Psoas muscle (tissue), 8 donors: ENCODE measurements at regions of chr1 and their contacts with region 1.

Region 1: DNA sequence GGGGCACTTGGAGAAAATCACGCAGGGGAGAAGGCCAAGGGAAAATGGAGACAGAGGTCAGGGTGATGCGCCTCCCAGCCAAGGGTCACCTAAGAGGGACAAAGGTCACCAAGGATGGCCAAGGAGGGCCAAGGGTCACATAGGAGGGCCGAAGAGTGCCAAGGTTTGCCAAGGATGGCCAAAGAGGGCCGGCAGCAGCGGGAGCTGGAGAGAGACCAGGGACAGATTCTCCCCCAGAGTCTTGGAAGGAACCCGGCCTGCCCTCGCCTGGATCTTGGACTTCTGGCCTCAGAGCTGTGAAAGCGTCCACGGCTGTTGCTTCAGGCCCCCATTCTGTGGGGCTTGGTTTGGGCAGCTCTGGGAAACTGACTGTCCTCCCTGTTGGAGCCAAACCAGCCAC is 25.6 kb upstream of the ARHGEF16 start:
- DNase-seq: peak in 1 of 2 donors; percentile 41
- ATAC-seq: no peak
- H3K4me3 ChIP-seq: no peak overlapping the region
- H3K27ac ChIP-seq: no peak overlapping the region
- H3K4me1 ChIP-seq: no peaks in the 10 kb centered on the region
- H3K27me3 ChIP-seq: peaks cover 0 to 3% (median 1%) of the 10 kb centered on the region in 3 donors
- CTCF ChIP-seq: no peak

Region 2: DNA sequence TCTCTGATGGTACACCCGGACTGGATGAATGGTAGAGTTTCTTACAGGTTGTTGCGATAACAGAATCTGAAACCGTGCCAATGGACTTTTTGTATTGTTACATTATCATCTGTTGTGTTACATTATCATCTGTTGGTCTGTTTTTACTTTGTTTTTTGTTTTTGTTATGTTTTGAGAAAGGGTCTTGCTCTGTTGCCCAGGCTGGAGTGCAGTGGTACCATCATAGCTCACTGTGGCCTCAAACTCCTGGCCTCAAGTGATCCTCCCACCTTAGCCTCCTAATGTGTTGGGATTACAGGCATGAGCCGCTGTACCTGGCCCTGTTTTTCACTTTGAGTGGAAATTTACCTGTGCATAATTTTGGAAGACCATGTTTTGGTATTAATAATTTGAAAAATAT is 1006.4 kb before region 1 on chr1:
- intact Hi-C with region 1: loop called in 1 of 2 experiments (anchors 5 kb)
- DNase-seq: no peak
- ATAC-seq: no peak
- H3K4me3 ChIP-seq: no peak overlapping the region
- H3K27ac ChIP-seq: no peak overlapping the region
- H3K4me1 ChIP-seq: no peaks in the 10 kb centered on the region
- H3K27me3 ChIP-seq: peaks cover 0 to 63% (median 27%) of the 10 kb centered on the region in 3 donors
- CTCF ChIP-seq: no peak

Region 3: DNA sequence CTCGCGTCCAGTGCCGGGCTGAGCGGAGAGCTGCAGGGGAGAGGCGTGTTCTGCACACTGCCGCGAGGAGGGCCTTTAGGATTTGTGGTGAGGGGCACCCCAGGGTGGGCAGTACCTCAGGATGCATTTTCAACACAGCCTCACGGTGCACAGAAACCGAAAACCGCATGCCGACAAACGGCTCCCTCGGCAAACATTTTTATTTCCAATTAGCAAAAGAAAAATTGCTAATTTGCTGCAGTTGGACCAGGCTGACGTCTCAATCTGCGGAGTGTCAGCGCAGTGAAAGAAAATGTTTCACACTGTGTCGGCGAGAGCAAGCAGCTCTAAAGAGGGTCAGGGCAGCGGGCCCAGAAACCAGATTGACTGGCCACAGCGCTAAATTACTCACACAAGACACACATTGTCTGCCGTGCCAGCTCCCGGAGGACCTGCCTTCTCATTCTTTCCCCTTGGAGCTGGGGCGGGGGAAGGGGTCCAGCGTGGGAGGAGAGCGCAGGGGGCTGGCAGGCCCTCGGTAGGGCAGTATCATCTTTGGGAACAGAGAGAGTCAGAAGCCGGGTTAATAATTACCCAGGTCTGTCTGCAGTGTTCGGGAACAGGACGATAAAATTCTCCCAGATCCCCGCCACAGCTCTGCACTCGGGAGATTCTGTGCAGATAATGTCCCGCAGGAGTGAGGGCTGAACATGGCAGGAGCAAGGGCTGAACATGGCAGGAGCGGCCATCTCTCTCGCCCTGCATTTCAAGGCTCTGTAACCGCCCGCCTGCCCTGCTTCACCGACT is 209.7 kb before region 1 on chr1:
- intact Hi-C with region 1: no loop called
- DNase-seq: peak; percentile 33 to 67
- ATAC-seq: peak; percentile 59 to 88 (median 70)
- H3K4me3 ChIP-seq: peak overlapping the region; percentile 30
- H3K27ac ChIP-seq: no peak overlapping the region
- H3K4me1 ChIP-seq: peaks cover 5% of the 10 kb centered on the region
- H3K27me3 ChIP-seq: peaks cover 0 to 47% (median 0%) of the 10 kb centered on the region in 3 donors
- CTCF ChIP-seq: no peak

Region 4: GRCh38 chr1:3304246-3304645 is 124.7 kb before region 1 on chr1:
- intact Hi-C with region 1: no loop called
- DNase-seq: no peak
- ATAC-seq: no peak
- H3K4me3 ChIP-seq: no peak overlapping the region
- H3K27ac ChIP-seq: no peak overlapping the region
- H3K4me1 ChIP-seq: no peaks in the 10 kb centered on the region
- H3K27me3 ChIP-seq: peaks cover 0 to 12% (median 0%) of the 10 kb centered on the region in 3 donors
- CTCF ChIP-seq: no peak